Activated CD4-positive, alpha-beta T cell treated with anti-CD3 and anti-CD28 coated beads, Interleukin-2, amount 10 ng/mL, durations not matched to agents 24 days and 14 days (primary cell): ENCODE measurements at regions of chr5 and their contacts with region 1.

Region 1: GRCh38 chr5:55711968-55712859 is at the start of gene SLC38A9:
- DNase-seq: peak; percentile 98
- H3K4me3 Mint-ChIP-seq: peak within 1 kb of the TSS; percentile 97
- H3K27ac Mint-ChIP-seq: peak within 1 kb of the TSS; percentile 90
- H3K4me1 Mint-ChIP-seq: peaks cover 28% of the 10 kb centered on the region
- H3K27me3 Mint-ChIP-seq: no peaks in the 10 kb centered on the region
- total RNA-seq, gene SLC38A9: 20.5 and 21.4 TPM in 2 replicates

Region 2: DNA sequence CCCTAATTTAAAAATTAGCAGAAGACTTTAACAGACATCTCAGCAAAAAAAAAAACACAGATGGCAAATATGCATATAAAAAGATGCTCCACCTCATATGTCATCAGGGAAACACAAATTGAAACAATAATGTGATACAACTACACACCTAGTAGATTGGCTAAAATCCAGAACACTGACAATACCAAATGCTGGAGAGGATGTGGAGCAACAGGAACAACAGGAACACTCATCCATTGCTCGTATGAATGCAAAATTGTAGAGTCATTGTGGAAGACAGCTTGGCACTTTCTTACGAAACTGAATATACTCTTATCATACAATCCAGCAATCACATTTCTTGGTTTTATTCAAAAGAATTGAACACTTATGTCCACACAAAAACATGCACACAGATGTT is 507.2 kb before region 1 on chr5:
- intact Hi-C with region 1: no loop called
- DNase-seq: no peak
- H3K4me3 Mint-ChIP-seq: no peak overlapping the region
- H3K27ac Mint-ChIP-seq: no peak overlapping the region
- H3K4me1 Mint-ChIP-seq: peaks cover 1% of the 10 kb centered on the region
- H3K27me3 Mint-ChIP-seq: peaks cover 58% of the 10 kb centered on the region

Region 3: GRCh38 chr5:55758231-55758630 is 46.0 kb after region 1 on chr5:
- intact Hi-C with region 1: loop called (anchors 5 kb)
- DNase-seq: no peak
- H3K4me3 Mint-ChIP-seq: peak overlapping the region; percentile 64
- H3K27ac Mint-ChIP-seq: peak overlapping the region; percentile 85
- H3K4me1 Mint-ChIP-seq: peaks cover 25% of the 10 kb centered on the region
- H3K27me3 Mint-ChIP-seq: no peaks in the 10 kb centered on the region

Region 4: DNA sequence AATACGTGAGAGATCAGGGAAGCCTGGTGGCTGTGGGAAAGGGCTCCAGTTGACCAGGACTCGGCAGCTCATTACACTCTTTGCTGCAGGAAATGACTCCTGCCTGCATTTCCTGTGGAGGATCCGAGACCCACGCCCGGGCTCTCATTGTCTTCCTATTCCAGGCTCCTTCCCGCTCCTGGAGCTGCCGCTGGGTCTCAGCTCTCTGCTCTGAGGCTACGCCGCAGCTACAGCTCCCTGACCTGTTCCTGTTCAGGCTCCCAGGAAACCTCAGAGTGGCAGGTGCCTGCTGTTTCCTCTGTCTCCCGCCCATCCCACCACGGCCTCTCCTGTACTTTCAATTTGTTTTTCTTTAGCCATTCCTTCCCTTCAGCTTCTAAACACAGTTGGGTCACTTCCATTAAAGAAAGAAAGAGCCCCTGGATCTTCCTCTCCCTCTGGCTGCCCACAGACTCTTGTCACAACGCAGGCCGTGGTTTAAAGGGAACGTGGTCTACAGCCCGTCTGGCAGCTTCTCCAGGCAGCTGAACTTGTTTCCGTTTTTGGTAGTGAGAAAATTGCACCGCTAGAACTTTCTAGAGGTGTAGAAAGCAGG is 211.1 kb after region 1 on chr5:
- intact Hi-C with region 1: loop called (anchors 5 kb)
- DNase-seq: peak; percentile 77
- H3K4me3 Mint-ChIP-seq: peak overlapping the region; percentile 90
- H3K27ac Mint-ChIP-seq: peak overlapping the region; percentile 89
- H3K4me1 Mint-ChIP-seq: peaks cover 36% of the 10 kb centered on the region
- H3K27me3 Mint-ChIP-seq: no peaks in the 10 kb centered on the region

Region 5: GRCh38 chr5:56012281-56012963 is 300.2 kb after region 1 on chr5:
- intact Hi-C with region 1: no loop called
- DNase-seq: peak; percentile 84
- H3K4me3 Mint-ChIP-seq: peak overlapping the region; percentile 47
- H3K27ac Mint-ChIP-seq: peak overlapping the region; percentile 47
- H3K4me1 Mint-ChIP-seq: peaks cover 28% of the 10 kb centered on the region
- H3K27me3 Mint-ChIP-seq: no peaks in the 10 kb centered on the region